ENCODE measurements at regions of chr1 and their contacts with region 1.

Region 1: DNA sequence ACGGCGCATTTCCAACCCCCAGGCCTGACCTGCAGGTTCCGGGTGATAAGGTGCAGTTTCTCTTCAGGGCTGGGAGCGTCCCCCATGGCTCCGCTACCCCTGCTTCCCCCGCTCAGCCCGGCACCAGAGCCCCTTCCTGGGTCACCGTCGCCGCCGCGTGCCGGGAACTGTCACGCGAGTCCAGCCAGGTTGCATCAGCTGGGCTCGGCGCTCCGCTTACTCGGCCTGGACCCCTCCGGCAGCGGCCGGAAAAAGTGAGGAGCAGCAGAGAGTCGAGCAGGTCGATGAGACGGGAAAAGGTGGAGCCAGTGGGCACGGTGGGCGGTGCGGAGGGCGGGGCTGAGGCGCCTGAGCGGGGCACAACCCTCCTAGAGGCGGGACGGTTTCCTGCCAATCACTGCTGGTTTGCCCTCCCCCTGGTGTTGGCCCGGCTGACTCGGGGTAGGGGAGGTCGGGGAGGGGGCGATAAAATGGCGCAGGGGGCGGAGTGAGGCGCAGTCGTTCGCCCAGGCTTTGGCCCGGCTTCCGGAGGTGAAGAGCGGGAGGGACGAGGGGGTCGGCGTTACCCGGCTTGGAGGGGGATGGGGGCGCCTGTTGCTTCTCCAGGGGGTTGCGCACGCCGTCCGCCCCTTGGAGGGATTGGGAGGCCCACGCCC is at the starts of genes S100PBP and YARS1:
- DNase-seq: peak; percentile 98 to 100 (median 100)
- ATAC-seq: peak; percentile 94
- H3K4me3 ChIP-seq: peak within 1 kb of the TSS; percentile 99
- H3K4me3 Mint-ChIP-seq: peak within 1 kb of the TSS; percentile 100
- H3K27ac ChIP-seq: peak within 1 kb of the TSS; percentile 85 to 87
- H3K27ac Mint-ChIP-seq: peak within 1 kb of the TSS; percentile 96
- H3K4me1 ChIP-seq: peaks cover 60% of the 10 kb centered on the region
- H3K4me1 Mint-ChIP-seq: peaks cover 63% of the 10 kb centered on the region
- H3K27me3 ChIP-seq: no peaks in the 10 kb centered on the region
- H3K27me3 Mint-ChIP-seq: no peaks in the 10 kb centered on the region
- CTCF ChIP-seq: no peak
- total RNA-seq, gene S100PBP: 18.8 to 21.6 TPM
- total RNA-seq, gene YARS1: 67.6 to 73.2 TPM

Region 2: GRCh38 chr1:32072622-32073298 is 744.5 kb before region 1 on chr1 and contains the start of gene TMEM39B:
- CTCF ChIA-PET with region 1: no interaction called
- POLR2A ChIA-PET with region 1: no interaction called
- intact Hi-C with region 1: loop called in 1 of 2 experiments (anchors 2 kb)
- DNase-seq: peak; percentile 86 to 98 (median 92)
- ATAC-seq: peak; percentile 84
- H3K4me3 ChIP-seq: peak within 1 kb of the TSS; percentile 71
- H3K4me3 Mint-ChIP-seq: peak within 1 kb of the TSS; percentile 89
- H3K27ac ChIP-seq: peak within 1 kb of the TSS; percentile 50 to 68
- H3K27ac Mint-ChIP-seq: peak within 1 kb of the TSS; percentile 82
- H3K4me1 ChIP-seq: peaks cover 27% of the 10 kb centered on the region
- H3K4me1 Mint-ChIP-seq: peaks cover 39% of the 10 kb centered on the region
- H3K27me3 ChIP-seq: no peaks in the 10 kb centered on the region
- H3K27me3 Mint-ChIP-seq: no peaks in the 10 kb centered on the region
- CTCF ChIP-seq: no peak
- total RNA-seq, gene TMEM39B: 7.2 to 7.9 TPM

Region 3: GRCh38 chr1:32612189-32612881 is 205.0 kb before region 1 on chr1:
- CTCF ChIA-PET with region 1: no interaction called
- POLR2A ChIA-PET with region 1: no interaction called
- intact Hi-C with region 1: no loop called
- DNase-seq: peak in 12 of 14 experiments; percentile 2 to 70 (median 24)
- ATAC-seq: peak; percentile 72
- H3K4me3 ChIP-seq: peak overlapping the region; percentile 51
- H3K4me3 Mint-ChIP-seq: peak overlapping the region; percentile 9
- H3K27ac ChIP-seq: no peak overlapping the region
- H3K27ac Mint-ChIP-seq: no peak overlapping the region
- H3K4me1 ChIP-seq: peaks cover 15% of the 10 kb centered on the region
- H3K4me1 Mint-ChIP-seq: peaks cover 6% of the 10 kb centered on the region
- H3K27me3 ChIP-seq: peaks cover 3 to 5% of the 10 kb centered on the region in 2 experiments
- H3K27me3 Mint-ChIP-seq: no peaks in the 10 kb centered on the region
- CTCF ChIP-seq: no peak

Region 4: GRCh38 chr1:32753532-32754312 is 63.6 kb before region 1 on chr1:
- CTCF ChIA-PET with region 1: no interaction called
- POLR2A ChIA-PET with region 1: no interaction called
- intact Hi-C with region 1: loop called (anchors 1 to 2 kb)
- DNase-seq: peak; percentile 37 to 89 (median 64)
- ATAC-seq: peak; percentile 71
- H3K4me3 ChIP-seq: peak overlapping the region; percentile 50
- H3K4me3 Mint-ChIP-seq: peak overlapping the region; percentile 88
- H3K27ac ChIP-seq: no peak overlapping the region
- H3K27ac Mint-ChIP-seq: peak overlapping the region; percentile 68
- H3K4me1 ChIP-seq: peaks cover 16% of the 10 kb centered on the region
- H3K4me1 Mint-ChIP-seq: peaks cover 27% of the 10 kb centered on the region
- H3K27me3 ChIP-seq: no peaks in the 10 kb centered on the region
- H3K27me3 Mint-ChIP-seq: no peaks in the 10 kb centered on the region
- CTCF ChIP-seq: no peak

Region 5: DNA sequence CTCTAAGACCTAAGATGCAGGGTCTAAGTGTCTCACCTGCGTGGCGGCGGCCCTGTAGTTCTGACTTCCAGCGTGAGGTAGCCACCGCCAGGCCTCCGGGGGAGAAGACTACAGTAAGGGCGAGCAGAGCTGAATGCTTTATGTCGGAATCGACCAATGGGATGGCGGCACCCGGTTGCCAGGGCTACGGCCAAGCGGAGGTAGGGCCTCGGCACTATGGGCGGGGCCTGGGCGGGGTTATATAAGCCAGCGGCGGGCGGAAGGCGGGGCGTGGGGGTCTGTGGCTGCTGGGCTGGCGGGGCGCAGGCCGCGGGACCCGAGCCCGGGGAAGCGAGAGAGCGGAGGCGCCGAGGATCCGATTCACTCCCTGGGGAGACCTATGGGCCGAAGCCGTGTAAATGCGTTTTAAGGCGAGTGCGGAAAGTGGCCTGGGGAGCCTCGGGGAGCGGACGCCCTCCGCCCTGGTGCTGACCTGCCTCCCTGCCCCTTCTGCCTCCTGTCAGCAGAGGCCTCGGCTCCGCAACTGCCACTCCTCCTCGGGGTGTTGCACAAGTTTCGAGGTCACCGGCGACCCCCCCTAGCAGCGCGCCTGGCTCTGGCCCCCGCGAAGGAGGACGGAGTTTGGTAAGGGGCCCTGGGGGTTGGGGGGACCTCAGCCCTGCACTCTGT is 263.7 kb after region 1 on chr1 and contains the start of gene AZIN2:
- CTCF ChIA-PET with region 1: no interaction called
- POLR2A ChIA-PET with region 1: interaction called, 3 read pairs
- intact Hi-C with region 1: loop called in 1 of 2 experiments (anchors 5 kb)
- DNase-seq: peak; percentile 95 to 100 (median 97)
- ATAC-seq: peak; percentile 99
- H3K4me3 ChIP-seq: peak within 1 kb of the TSS; percentile 82
- H3K4me3 Mint-ChIP-seq: peak within 1 kb of the TSS; percentile 94
- H3K27ac ChIP-seq: peak within 1 kb of the TSS in 1 of 2 donors; percentile 27
- H3K27ac Mint-ChIP-seq: peak within 1 kb of the TSS; percentile 81
- H3K4me1 ChIP-seq: peaks cover 23% of the 10 kb centered on the region
- H3K4me1 Mint-ChIP-seq: peaks cover 36% of the 10 kb centered on the region
- H3K27me3 ChIP-seq: no peaks in the 10 kb centered on the region
- H3K27me3 Mint-ChIP-seq: no peaks in the 10 kb centered on the region
- CTCF ChIP-seq: no peak
- total RNA-seq, gene AZIN2: 4.6 to 4.9 TPM

Region 6: GRCh38 chr1:33349778-33350610 is 532.7 kb after region 1 on chr1:
- CTCF ChIA-PET with region 1: no interaction called
- POLR2A ChIA-PET with region 1: no interaction called
- intact Hi-C with region 1: loop called in 1 of 2 experiments (anchors 5 kb)
- DNase-seq: peak; percentile 53 to 92 (median 74)
- ATAC-seq: peak; percentile 86
- H3K4me3 ChIP-seq: peak overlapping the region; percentile 90
- H3K4me3 Mint-ChIP-seq: peak overlapping the region; percentile 87
- H3K27ac ChIP-seq: peak overlapping the region in 1 of 2 donors; percentile 56
- H3K27ac Mint-ChIP-seq: peak overlapping the region; percentile 84
- H3K4me1 ChIP-seq: peaks cover 30% of the 10 kb centered on the region
- H3K4me1 Mint-ChIP-seq: peaks cover 46% of the 10 kb centered on the region
- H3K27me3 ChIP-seq: no peaks in the 10 kb centered on the region
- H3K27me3 Mint-ChIP-seq: no peaks in the 10 kb centered on the region
- CTCF ChIP-seq: no peak

Region 7: GRCh38 chr1:33443080-33443704 is 625.9 kb after region 1 on chr1:
- CTCF ChIA-PET with region 1: no interaction called
- POLR2A ChIA-PET with region 1: no interaction called
- intact Hi-C with region 1: no loop called
- DNase-seq: no peak
- ATAC-seq: no peak
- H3K4me3 ChIP-seq: no peak overlapping the region
- H3K4me3 Mint-ChIP-seq: no peak overlapping the region
- H3K27ac ChIP-seq: no peak overlapping the region
- H3K27ac Mint-ChIP-seq: no peak overlapping the region
- H3K4me1 ChIP-seq: no peaks in the 10 kb centered on the region
- H3K4me1 Mint-ChIP-seq: no peaks in the 10 kb centered on the region
- H3K27me3 ChIP-seq: peaks cover 9 to 17% of the 10 kb centered on the region in 2 experiments
- H3K27me3 Mint-ChIP-seq: peaks cover 25% of the 10 kb centered on the region
- CTCF ChIP-seq: no peak

Measured in CD4-positive, alpha-beta T cell (primary cell).